ENCODE measurements at regions of chr5 and their contacts with region 1.

Region 1: GRCh38 chr5:89232139-89232603 is 349.2 kb upstream of the MEF2C start:
- DNase-seq: no peak
- ATAC-seq: no peak
- H3K4me3 ChIP-seq: no peak overlapping the region
- H3K27ac ChIP-seq: no peak overlapping the region
- H3K4me1 ChIP-seq: no peaks in the 10 kb centered on the region
- H3K27me3 ChIP-seq: no peaks in the 10 kb centered on the region
- CTCF ChIP-seq: no peak

Region 2: GRCh38 chr5:89268460-89268859 is 36.3 kb after region 1 on chr5:
- CTCF ChIA-PET with region 1: no interaction called
- POLR2A ChIA-PET with region 1: no interaction called
- in situ Hi-C with region 1: no loop called
- intact Hi-C with region 1: no loop called
- DNase-seq: no peak
- ATAC-seq: no peak
- H3K4me3 ChIP-seq: no peak overlapping the region
- H3K27ac ChIP-seq: no peak overlapping the region
- H3K4me1 ChIP-seq: no peaks in the 10 kb centered on the region
- H3K27me3 ChIP-seq: no peaks in the 10 kb centered on the region
- CTCF ChIP-seq: no peak

Region 3: GRCh38 chr5:90056911-90057705 is 824.9 kb after region 1 on chr5:
- CTCF ChIA-PET with region 1: no interaction called
- POLR2A ChIA-PET with region 1: interaction called, 13 read pairs
- in situ Hi-C with region 1: no loop called
- intact Hi-C with region 1: no loop called
- DNase-seq: no peak
- ATAC-seq: no peak
- H3K4me3 ChIP-seq: no peak overlapping the region
- H3K27ac ChIP-seq: no peak overlapping the region
- H3K4me1 ChIP-seq: no peaks in the 10 kb centered on the region
- H3K27me3 ChIP-seq: no peaks in the 10 kb centered on the region
- CTCF ChIP-seq: no peak

Measured in Panc1 (cell line).